RWPE1 (cell line): ENCODE measurements at regions of chr1 and their contacts with region 1.

Region 1: DNA sequence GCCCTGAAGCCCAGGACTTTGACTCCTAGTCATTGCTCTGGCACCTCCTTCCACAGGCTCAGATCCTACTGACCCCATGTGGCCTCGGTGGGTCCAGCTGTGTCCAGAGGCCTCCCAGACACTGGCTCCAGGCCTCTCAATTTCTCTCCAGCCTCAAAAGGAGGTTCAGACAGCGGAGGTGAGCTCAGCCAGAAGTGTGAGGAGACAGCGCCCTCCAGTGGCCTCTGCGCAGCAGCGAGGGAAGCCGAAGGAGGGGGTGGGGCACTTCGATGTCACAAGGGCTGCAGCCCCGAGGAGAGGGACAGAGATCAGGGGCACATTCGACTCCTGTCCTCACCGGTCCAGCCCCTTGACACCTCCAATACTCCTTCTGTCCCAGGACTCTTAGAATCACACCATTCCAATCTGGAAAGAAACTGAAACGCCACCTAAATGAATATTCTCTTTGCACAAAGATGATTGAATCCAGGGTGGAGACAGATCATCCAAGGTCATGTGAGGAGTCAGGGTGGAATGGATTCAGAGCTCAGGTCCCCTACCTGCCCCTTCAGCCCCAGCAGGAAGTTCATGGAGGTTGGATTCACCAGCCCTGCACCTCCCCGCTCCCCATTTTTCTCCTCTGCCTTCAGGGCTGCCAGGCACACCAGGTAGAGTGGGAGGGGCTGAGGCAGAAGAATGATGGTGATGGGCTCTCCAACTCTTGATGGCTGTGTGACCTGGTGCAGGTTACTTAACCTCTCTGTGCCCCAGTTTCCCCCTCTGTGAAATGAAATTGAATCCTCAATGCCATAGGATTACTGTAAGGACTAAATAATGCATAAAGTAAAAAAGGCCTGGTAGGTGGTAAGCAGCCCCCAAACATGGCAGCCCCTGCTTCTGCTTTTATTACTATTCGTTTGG is 34.8 kb upstream of the ZBTB40 start:
- DNase-seq: peak; percentile 84
- H3K27ac ChIP-seq: no peak overlapping the region
- CTCF ChIP-seq: peak; percentile 91

Region 2: DNA sequence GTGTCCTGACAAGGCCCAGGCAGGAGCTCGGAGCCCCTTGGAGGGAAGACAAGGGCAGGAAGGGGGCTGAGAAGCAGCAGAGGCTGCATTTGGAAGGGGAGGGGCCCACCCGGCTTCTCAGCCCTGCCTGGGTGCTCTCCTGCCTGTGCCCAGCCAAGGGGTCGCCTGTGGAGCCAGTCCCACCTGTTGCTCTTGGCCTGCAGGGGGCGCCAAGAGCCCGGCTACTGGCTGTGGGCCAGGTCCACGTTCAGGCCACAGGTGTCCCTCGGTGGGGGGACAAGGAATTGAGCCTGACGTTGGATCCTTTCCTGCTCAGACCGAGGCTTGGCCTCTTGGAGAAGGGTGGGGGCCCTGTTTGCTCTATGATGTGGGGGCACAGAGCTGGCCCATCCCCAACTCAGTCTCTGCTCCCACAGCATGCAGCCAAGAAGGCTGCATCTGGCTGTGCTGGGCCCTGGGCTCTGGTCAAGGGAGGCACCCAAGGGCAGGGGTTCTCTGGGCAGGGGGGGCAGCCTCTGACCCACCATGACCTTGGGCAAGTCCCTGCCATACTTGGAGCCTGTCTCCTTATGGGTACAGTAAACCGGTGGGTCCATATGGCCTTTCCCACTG is 284.8 kb before region 1 on chr1:
- CTCF ChIA-PET with region 1: interaction called, 17 read pairs
- POLR2A ChIA-PET with region 1: no interaction called
- DNase-seq: peak; percentile 54
- H3K27ac ChIP-seq: peak overlapping the region; percentile 99
- CTCF ChIP-seq: peak; percentile 76

Region 3: DNA sequence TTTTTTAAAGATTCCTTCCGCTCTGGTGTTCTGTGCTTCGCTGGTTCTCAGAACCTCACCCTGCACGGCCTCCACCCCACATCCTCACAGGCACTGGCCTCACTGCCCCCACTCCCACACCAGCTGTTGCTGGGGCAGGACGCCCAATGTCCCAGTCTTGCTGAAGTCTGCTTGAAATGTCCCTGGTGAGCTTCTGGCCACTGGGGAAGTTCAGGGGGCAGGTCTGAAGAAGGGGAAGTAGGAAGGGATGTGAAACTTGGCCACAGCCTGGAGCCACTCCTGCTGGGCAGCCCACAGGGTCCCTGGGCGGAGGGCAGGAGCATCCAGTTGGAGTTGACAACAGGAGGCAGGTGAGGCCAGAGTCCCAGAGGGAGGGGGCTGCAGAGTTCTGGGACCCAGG is 219.5 kb after region 1 on chr1 and contains the start of gene C1QA:
- CTCF ChIA-PET with region 1: interaction called, 46 read pairs
- POLR2A ChIA-PET with region 1: no interaction called
- DNase-seq: no peak
- H3K27ac ChIP-seq: no peak within 1 kb of the TSS
- CTCF ChIP-seq: no peak

Region 4: DNA sequence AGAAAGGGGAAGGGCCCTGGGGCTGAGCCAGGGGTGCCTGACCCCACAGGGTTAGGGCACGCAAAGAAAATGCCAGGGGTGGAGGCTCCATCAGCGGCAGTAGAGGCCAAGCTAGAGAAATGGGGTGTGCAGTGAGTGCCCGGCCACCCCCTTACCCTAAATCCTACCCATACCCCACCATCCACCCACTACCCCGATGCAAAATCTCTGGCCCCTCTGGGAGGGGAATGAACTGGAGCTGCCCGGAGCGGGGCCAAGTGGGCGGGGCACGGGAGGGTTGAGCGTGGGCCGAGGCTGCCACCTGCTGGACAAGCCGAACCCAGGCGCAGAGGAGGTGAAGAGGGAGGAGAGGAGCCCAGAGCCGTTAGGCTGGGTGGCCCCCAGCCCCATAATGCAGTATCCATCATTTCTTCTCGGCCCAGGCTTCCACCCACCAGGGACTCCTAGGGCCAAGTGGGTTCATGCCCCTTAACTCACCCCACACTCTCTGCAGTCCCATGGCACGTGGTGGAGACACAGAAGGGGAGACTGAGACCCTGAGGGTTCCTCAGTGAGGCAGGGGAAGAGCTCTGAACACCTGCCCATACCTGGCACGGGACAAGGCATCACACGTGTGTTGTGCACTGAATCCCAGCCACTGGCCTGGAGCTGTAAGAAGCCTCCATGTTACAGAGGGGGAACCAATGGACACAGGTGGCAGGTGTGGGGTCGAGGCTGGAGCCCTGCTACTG is 225.3 kb after region 1 on chr1:
- CTCF ChIA-PET with region 1: interaction called, 46 read pairs
- POLR2A ChIA-PET with region 1: no interaction called
- DNase-seq: peak; percentile 78
- H3K27ac ChIP-seq: no peak overlapping the region
- CTCF ChIP-seq: peak; percentile 91